Naive thymus-derived CD4-positive, alpha-beta T cell (primary cell): ENCODE measurements at regions of chr17 and their contacts with region 1.

Region 1: DNA sequence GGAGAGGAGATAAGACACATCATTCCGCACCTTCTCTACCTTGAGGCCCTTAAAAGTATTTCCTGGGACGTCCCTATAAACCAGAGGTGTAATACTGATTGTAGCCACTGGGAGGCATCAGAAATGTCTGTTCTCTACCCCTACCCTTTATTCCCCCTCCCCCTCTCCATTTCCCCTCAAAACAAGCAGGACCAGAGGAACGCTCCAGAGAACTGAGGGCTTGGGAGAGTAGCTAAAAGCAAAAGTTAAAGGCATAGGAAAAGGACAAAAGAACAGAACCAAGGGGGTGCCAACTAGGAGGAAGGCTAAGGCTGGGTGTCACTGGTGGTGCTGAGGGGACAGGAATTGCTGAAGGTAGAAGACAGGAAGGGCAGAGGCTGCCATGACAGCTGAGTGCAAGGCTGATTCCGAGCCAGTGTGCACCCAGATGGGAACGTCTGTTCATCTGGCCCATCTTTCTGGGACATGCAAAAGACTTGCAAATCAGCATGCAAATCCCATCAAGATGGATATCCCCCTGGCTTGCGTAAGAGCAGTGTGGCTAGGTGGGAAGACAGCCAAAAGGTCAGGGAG is 6.7 kb downstream of the CAMTA2 start:
- DNase-seq: peak in 7 of 9 donors; percentile 58 to 77 (median 74)
- ATAC-seq: peak; percentile 92
- H3K4me3 ChIP-seq: no peak overlapping the region
- H3K4me3 Mint-ChIP-seq: peak overlapping the region in 8 of 10 donors; percentile 2 to 83 (median 41)
- H3K27ac ChIP-seq: no peak overlapping the region
- H3K27ac Mint-ChIP-seq: peak overlapping the region; percentile 31 to 78 (median 67)
- H3K4me1 ChIP-seq: peaks cover 3 to 14% of the 10 kb centered on the region in 2 donors
- H3K4me1 Mint-ChIP-seq: peaks cover 13 to 34% (median 26%) of the 10 kb centered on the region in 7 donors
- H3K27me3 ChIP-seq: no peaks in the 10 kb centered on the region
- H3K27me3 Mint-ChIP-seq: no peaks in the 10 kb centered on the region

Region 2: GRCh38 chr17:4939796-4940624 is 40.7 kb before region 1 on chr17 and contains the starts of genes RNF167 and SLC25A11:
- CTCF ChIA-PET with region 1: interaction called, 4 read pairs
- POLR2A ChIA-PET with region 1: interaction called, 17 read pairs
- intact Hi-C with region 1: no loop called
- DNase-seq: peak; percentile 86 to 99 (median 98)
- ATAC-seq: peak; percentile 94
- H3K4me3 ChIP-seq: peak within 1 kb of the TSS; percentile 89
- H3K4me3 Mint-ChIP-seq: peak within 1 kb of the TSS; percentile 92 to 100 (median 98)
- H3K27ac ChIP-seq: peak within 1 kb of the TSS; percentile 89
- H3K27ac Mint-ChIP-seq: peak within 1 kb of the TSS; percentile 89 to 98 (median 95)
- H3K4me1 ChIP-seq: peaks cover 47 to 48% of the 10 kb centered on the region in 2 donors
- H3K4me1 Mint-ChIP-seq: peaks cover 52 to 77% (median 66%) of the 10 kb centered on the region in 7 donors
- H3K27me3 ChIP-seq: no peaks in the 10 kb centered on the region
- H3K27me3 Mint-ChIP-seq: no peaks in the 10 kb centered on the region
- total RNA-seq, gene RNF167: 97.3 to 248 (median 148) TPM
- total RNA-seq, gene SLC25A11: 27.0 to 82.6 (median 44.1) TPM

Region 3: GRCh38 chr17:5019475-5019956 is 38.8 kb after region 1 on chr17:
- CTCF ChIA-PET with region 1: interaction called, 5 read pairs
- POLR2A ChIA-PET with region 1: interaction called, 3 read pairs
- intact Hi-C with region 1: loop called in 1 of 2 experiments (anchors 1 kb)
- DNase-seq: peak in 5 of 9 donors; percentile 22 to 42 (median 39)
- ATAC-seq: peak; percentile 73
- H3K4me3 ChIP-seq: no peak overlapping the region
- H3K4me3 Mint-ChIP-seq: no peak overlapping the region
- H3K27ac ChIP-seq: no peak overlapping the region
- H3K27ac Mint-ChIP-seq: peak overlapping the region in 6 of 9 donors; percentile 49 to 78 (median 73)
- H3K4me1 ChIP-seq: no peaks in the 10 kb centered on the region
- H3K4me1 Mint-ChIP-seq: peaks cover 4 to 15% (median 7%) of the 10 kb centered on the region in 7 donors
- H3K27me3 ChIP-seq: no peaks in the 10 kb centered on the region
- H3K27me3 Mint-ChIP-seq: no peaks in the 10 kb centered on the region

Region 4: GRCh38 chr17:5055543-5055942 is 74.8 kb after region 1 on chr17:
- CTCF ChIA-PET with region 1: interaction called, 15 read pairs
- POLR2A ChIA-PET with region 1: interaction called, 3 read pairs
- intact Hi-C with region 1: no loop called
- DNase-seq: no peak
- ATAC-seq: no peak
- H3K4me3 ChIP-seq: no peak overlapping the region
- H3K4me3 Mint-ChIP-seq: no peak overlapping the region
- H3K27ac ChIP-seq: no peak overlapping the region
- H3K27ac Mint-ChIP-seq: peak overlapping the region in 1 of 9 donors; percentile 20
- H3K4me1 ChIP-seq: peaks cover 0 to 4% of the 10 kb centered on the region in 2 donors
- H3K4me1 Mint-ChIP-seq: peaks cover 0 to 1% (median 0%) of the 10 kb centered on the region in 7 donors
- H3K27me3 ChIP-seq: no peaks in the 10 kb centered on the region
- H3K27me3 Mint-ChIP-seq: no peaks in the 10 kb centered on the region

Region 5: DNA sequence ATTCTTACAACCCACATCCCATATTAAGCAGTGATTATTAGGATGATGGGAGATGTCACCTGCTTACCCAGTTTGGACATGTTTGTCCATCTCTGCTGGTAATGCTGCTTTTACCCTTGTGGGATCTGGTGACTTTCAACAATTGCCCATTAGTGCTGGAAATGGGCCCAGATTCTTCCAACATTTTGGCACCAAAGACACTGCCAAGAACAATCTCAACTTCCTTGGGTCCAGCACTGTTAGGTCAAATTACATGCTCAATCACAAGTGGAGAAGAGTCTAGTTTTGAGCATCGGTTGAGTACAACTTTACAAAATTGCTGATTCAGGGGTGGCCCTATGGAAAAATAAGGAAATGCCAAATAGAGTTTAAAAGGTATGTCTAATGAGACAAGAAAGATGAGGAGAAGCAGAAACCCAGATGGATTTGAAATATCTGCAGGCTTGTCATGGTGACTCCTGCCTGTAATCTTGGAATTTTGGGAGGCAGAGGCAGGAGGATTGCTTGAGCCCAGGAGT is 84.6 kb after region 1 on chr17:
- CTCF ChIA-PET with region 1: interaction called, 15 read pairs
- POLR2A ChIA-PET with region 1: interaction called, 4 read pairs
- intact Hi-C with region 1: loop called (anchors 1 kb)
- DNase-seq: no peak
- ATAC-seq: no peak
- H3K4me3 ChIP-seq: no peak overlapping the region
- H3K4me3 Mint-ChIP-seq: no peak overlapping the region
- H3K27ac ChIP-seq: no peak overlapping the region
- H3K27ac Mint-ChIP-seq: no peak overlapping the region
- H3K4me1 ChIP-seq: peaks cover 0 to 2% of the 10 kb centered on the region in 2 donors
- H3K4me1 Mint-ChIP-seq: peaks cover 0 to 10% (median 7%) of the 10 kb centered on the region in 7 donors
- H3K27me3 ChIP-seq: no peaks in the 10 kb centered on the region
- H3K27me3 Mint-ChIP-seq: no peaks in the 10 kb centered on the region